PC-3 (cell line): ENCODE measurements at regions of chr6 and their contacts with region 1.

Region 1: DNA sequence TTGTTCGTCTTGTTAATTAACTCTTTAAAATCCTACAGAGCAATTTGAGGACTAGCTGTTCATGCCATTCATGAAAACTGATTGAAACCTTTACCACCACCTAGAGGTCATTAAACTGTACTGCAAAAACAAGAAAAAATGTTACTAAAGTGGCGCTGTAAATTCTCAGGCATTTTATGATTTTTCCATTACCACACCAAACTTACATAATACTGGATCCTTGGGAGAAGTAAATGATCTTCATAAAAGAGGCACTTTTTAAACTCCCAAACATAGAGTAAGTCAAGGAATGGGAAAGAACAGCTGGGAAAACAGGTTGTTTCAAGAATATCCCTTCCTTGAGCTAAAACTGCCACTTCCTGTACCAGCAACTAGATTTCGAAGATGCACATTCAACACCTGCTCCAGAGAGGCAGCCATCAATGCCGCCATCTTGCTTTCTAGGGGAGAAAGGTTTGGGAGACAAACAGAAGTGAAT is 54.3 kb downstream of the MYLIP start:
- DNase-seq: peak; percentile 63
- ATAC-seq: peak; percentile 29; the same call in 1 of the 2 replicates
- H3K4me3 ChIP-seq: no peak overlapping the region
- H3K27ac ChIP-seq: no peak overlapping the region
- H3K4me1 ChIP-seq: no peaks in the 10 kb centered on the region
- H3K27me3 ChIP-seq: peaks cover 15% of the 10 kb centered on the region; the same call in 1 of the 2 replicates
- CTCF ChIP-seq: peak; percentile 84

Region 2: GRCh38 chr6:15691250-15691869 is 491.9 kb before region 1 on chr6:
- CTCF ChIA-PET with region 1: interaction called, 29 read pairs
- POLR2A ChIA-PET with region 1: no interaction called
- intact Hi-C with region 1: loop called (anchors 1 kb)
- DNase-seq: peak; percentile 92
- ATAC-seq: peak; percentile 99
- H3K4me3 ChIP-seq: peak overlapping the region; percentile 67
- H3K27ac ChIP-seq: no peak overlapping the region
- H3K4me1 ChIP-seq: peaks cover 9% of the 10 kb centered on the region
- H3K27me3 ChIP-seq: no peaks in the 10 kb centered on the region
- CTCF ChIP-seq: peak; percentile 99

Region 3: GRCh38 chr6:15893556-15894268 is 289.5 kb before region 1 on chr6:
- CTCF ChIA-PET with region 1: interaction called, 18 read pairs
- POLR2A ChIA-PET with region 1: no interaction called
- intact Hi-C with region 1: loop called (anchors 1 kb)
- DNase-seq: peak; percentile 86
- ATAC-seq: peak; percentile 62
- H3K4me3 ChIP-seq: no peak overlapping the region
- H3K27ac ChIP-seq: no peak overlapping the region
- H3K4me1 ChIP-seq: 0 out of 2 replicates have a peak, but pooled peaks cover 4% of the 10 kb centered on the region
- H3K27me3 ChIP-seq: no peaks in the 10 kb centered on the region
- CTCF ChIP-seq: peak; percentile 79

Region 4: GRCh38 chr6:16136621-16137450 is 46.4 kb before region 1 on chr6:
- CTCF ChIA-PET with region 1: no interaction called
- POLR2A ChIA-PET with region 1: no interaction called
- intact Hi-C with region 1: loop called (anchors 5 kb)
- DNase-seq: peak; percentile 87
- ATAC-seq: peak; percentile 95
- H3K4me3 ChIP-seq: peak overlapping the region; percentile 48
- H3K27ac ChIP-seq: peak overlapping the region; percentile 68
- H3K4me1 ChIP-seq: peaks cover 54% of the 10 kb centered on the region
- H3K27me3 ChIP-seq: no peaks in the 10 kb centered on the region
- CTCF ChIP-seq: no peak